Spleen (tissue), 13 donors: ENCODE measurements at regions of chr3 and their contacts with region 1.

Region 1: DNA sequence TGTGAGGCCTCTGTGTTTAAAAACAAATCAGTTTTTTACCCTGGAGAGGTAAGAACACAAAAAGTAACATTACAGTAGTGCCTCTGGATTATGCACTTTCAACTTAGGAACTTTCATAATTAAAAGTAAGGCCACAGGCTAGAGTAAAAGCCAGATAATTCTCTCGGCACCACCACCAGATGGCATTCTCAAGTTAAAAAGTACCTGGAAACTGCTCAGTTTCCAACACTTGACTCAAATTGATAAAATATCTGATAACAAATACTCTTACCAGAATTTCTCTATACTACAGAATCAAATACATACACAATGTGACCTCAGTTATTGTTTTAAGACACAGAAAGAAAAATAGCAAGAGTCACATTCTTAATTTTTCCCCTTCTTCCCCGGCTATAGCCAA is 19.9 kb downstream of the SPICE1 start:
- DNase-seq: no peak
- H3K4me3 ChIP-seq: no peak overlapping the region
- H3K27ac ChIP-seq: no peak overlapping the region
- H3K4me1 ChIP-seq: no peaks in the 10 kb centered on the region
- H3K27me3 ChIP-seq: no peaks in the 10 kb centered on the region
- CTCF ChIP-seq: peak in 7 of 11 experiments; percentile 23 to 62 (median 48)
- POLR2A ChIP-seq: no peak

Region 2: GRCh38 chr3:113070681-113071143 is 424.3 kb before region 1 on chr3:
- intact Hi-C with region 1: no loop called
- DNase-seq: no peak
- H3K4me3 ChIP-seq: no peak overlapping the region
- H3K27ac ChIP-seq: no peak overlapping the region
- H3K4me1 ChIP-seq: no peaks in the 10 kb centered on the region
- H3K27me3 ChIP-seq: no peaks in the 10 kb centered on the region
- CTCF ChIP-seq: no peak
- POLR2A ChIP-seq: no peak

Region 3: DNA sequence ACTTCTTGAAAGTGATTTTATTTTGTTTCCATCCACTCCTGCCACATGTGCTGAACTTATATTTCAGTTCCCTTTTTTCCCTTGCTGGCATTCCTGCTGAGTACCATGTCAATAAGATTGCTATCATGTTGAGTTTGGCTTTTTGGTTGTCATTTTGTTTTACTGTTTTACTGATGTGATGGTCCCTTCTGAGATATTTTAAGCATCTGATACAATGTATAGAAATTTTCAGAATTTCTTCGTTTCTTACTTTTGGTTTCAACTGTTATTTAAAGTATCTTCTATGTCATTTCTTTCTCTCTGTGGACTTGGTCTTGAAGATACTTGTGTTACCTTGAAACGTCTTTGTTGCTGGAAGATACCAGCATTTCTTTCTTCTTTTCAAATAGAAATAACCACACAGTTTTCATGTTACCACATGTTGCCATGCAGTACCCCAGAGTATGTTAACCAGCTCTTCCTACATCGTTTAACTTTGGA is 51.4 kb after region 1 on chr3:
- intact Hi-C with region 1: no loop called
- DNase-seq: no peak
- H3K4me3 ChIP-seq: no peak overlapping the region
- H3K27ac ChIP-seq: no peak overlapping the region
- H3K4me1 ChIP-seq: peaks cover 0 to 35% (median 0%) of the 10 kb centered on the region in 6 donors
- H3K27me3 ChIP-seq: no peaks in the 10 kb centered on the region
- CTCF ChIP-seq: no peak
- POLR2A ChIP-seq: no peak

Region 4: GRCh38 chr3:113575206-113575605 is 80.2 kb after region 1 on chr3:
- intact Hi-C with region 1: loop called (anchors 5 kb)
- DNase-seq: no peak
- H3K4me3 ChIP-seq: no peak overlapping the region
- H3K27ac ChIP-seq: no peak overlapping the region
- H3K4me1 ChIP-seq: peaks cover 0 to 14% (median 0%) of the 10 kb centered on the region in 6 donors
- H3K27me3 ChIP-seq: no peaks in the 10 kb centered on the region
- CTCF ChIP-seq: no peak
- POLR2A ChIP-seq: no peak

Region 5: GRCh38 chr3:113626503-113627371 is 131.7 kb after region 1 on chr3:
- intact Hi-C with region 1: loop called (anchors 5 kb)
- DNase-seq: peak; percentile 82
- H3K4me3 ChIP-seq: peak overlapping the region in 1 of 8 donors; percentile 42
- H3K27ac ChIP-seq: peak overlapping the region in 6 of 8 donors; percentile 55 to 80 (median 71)
- H3K4me1 ChIP-seq: peaks cover 0 to 49% (median 18%) of the 10 kb centered on the region in 6 donors
- H3K27me3 ChIP-seq: no peaks in the 10 kb centered on the region
- CTCF ChIP-seq: peak; percentile 25 to 81 (median 69)
- POLR2A ChIP-seq: no peak

Region 6: GRCh38 chr3:113745273-113746068 is 250.4 kb after region 1 on chr3:
- intact Hi-C with region 1: loop called (anchors 5 kb)
- DNase-seq: peak; percentile 94
- H3K4me3 ChIP-seq: peak overlapping the region; percentile 63 to 89 (median 77)
- H3K27ac ChIP-seq: peak overlapping the region; percentile 93 to 99 (median 98)
- H3K4me1 ChIP-seq: peaks cover 39 to 81% (median 76%) of the 10 kb centered on the region in 6 donors
- H3K27me3 ChIP-seq: no peaks in the 10 kb centered on the region
- CTCF ChIP-seq: peak; percentile 39 to 86 (median 76)
- POLR2A ChIP-seq: no peak